PC-3 (cell line): ENCODE measurements at regions of chr2 and their contacts with region 1.

Region 1: GRCh38 chr2:39356922-39357639 is 80.0 kb downstream of the MAP4K3 start:
- DNase-seq: no peak
- ATAC-seq: no peak
- H3K4me3 ChIP-seq: no peak overlapping the region
- H3K27ac ChIP-seq: no peak overlapping the region
- H3K4me1 ChIP-seq: no peaks in the 10 kb centered on the region
- H3K27me3 ChIP-seq: no peaks in the 10 kb centered on the region
- CTCF ChIP-seq: no peak

Region 2: GRCh38 chr2:39408316-39409136 is 51.4 kb after region 1 on chr2:
- CTCF ChIA-PET with region 1: no interaction called
- POLR2A ChIA-PET with region 1: no interaction called
- intact Hi-C with region 1: no loop called
- DNase-seq: no peak
- ATAC-seq: no peak
- H3K4me3 ChIP-seq: no peak overlapping the region
- H3K27ac ChIP-seq: no peak overlapping the region
- H3K4me1 ChIP-seq: peaks cover 46% of the 10 kb centered on the region
- H3K27me3 ChIP-seq: no peaks in the 10 kb centered on the region
- CTCF ChIP-seq: no peak

Region 3: GRCh38 chr2:39642051-39642742 is 285.1 kb after region 1 on chr2:
- CTCF ChIA-PET with region 1: no interaction called
- POLR2A ChIA-PET with region 1: interaction called, 17 read pairs
- intact Hi-C with region 1: no loop called
- DNase-seq: peak; percentile 95
- ATAC-seq: peak; percentile 92
- H3K4me3 ChIP-seq: peak overlapping the region; percentile 7; the same call in 1 of the 2 replicates
- H3K27ac ChIP-seq: peak overlapping the region; percentile 72
- H3K4me1 ChIP-seq: peaks cover 59% of the 10 kb centered on the region
- H3K27me3 ChIP-seq: no peaks in the 10 kb centered on the region
- CTCF ChIP-seq: no peak